ENCODE measurements at regions of chr18 and their contacts with region 1.

Region 1: DNA sequence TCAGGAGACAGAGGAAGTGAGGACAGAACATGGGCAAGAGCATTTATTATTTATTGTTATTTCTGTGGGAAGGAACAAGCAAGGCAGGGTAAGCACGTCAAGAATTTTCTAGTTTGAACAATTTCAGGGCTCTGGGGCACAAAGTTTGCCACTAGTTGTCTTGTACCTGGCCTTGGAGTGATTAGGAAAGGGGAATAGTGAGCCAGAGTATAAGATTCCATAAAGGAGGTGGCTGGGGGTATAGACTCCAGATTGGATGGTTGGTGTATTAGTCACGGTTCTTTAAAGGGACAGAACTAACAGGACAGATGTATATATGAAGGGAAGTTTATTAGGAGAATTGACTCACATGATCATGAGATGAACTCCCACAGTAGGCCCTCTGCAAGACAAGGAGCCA is 31.7 kb upstream of the PTPRM start:
- DNase-seq: no peak
- H3K4me3 ChIP-seq: no peak overlapping the region
- H3K27ac ChIP-seq: no peak overlapping the region
- H3K4me1 ChIP-seq: no peaks in the 10 kb centered on the region
- H3K27me3 ChIP-seq: no peaks in the 10 kb centered on the region
- CTCF ChIP-seq: no peak

Region 2: GRCh38 chr18:7511106-7511505 is 24.3 kb before region 1 on chr18:
- CTCF ChIA-PET with region 1: no interaction called
- POLR2A ChIA-PET with region 1: no interaction called
- intact Hi-C with region 1: loop called (anchors 1 kb)
- DNase-seq: no peak
- H3K4me3 ChIP-seq: no peak overlapping the region
- H3K27ac ChIP-seq: no peak overlapping the region
- H3K4me1 ChIP-seq: no peaks in the 10 kb centered on the region
- H3K27me3 ChIP-seq: no peaks in the 10 kb centered on the region
- CTCF ChIP-seq: no peak

Region 3: GRCh38 chr18:7584646-7585275 is 49.4 kb after region 1 on chr18:
- CTCF ChIA-PET with region 1: no interaction called
- POLR2A ChIA-PET with region 1: no interaction called
- intact Hi-C with region 1: no loop called
- DNase-seq: no peak
- H3K4me3 ChIP-seq: no peak overlapping the region
- H3K27ac ChIP-seq: no peak overlapping the region
- H3K4me1 ChIP-seq: no peaks in the 10 kb centered on the region
- H3K27me3 ChIP-seq: no peaks in the 10 kb centered on the region
- CTCF ChIP-seq: no peak